Mammary epithelial cell (primary cell): ENCODE measurements at regions of chr18 and their contacts with region 1.

Region 1: GRCh38 chr18:74476140-74476539 is 19.0 kb upstream of the DIPK1C start:
- DNase-seq: no peak
- H3K4me3 ChIP-seq: no peak overlapping the region
- H3K27ac ChIP-seq: no peak overlapping the region
- H3K4me1 ChIP-seq: no peaks in the 10 kb centered on the region
- H3K27me3 ChIP-seq: no peaks in the 10 kb centered on the region
- CTCF ChIP-seq: peak; percentile 30 to 44

Region 2: GRCh38 chr18:74428891-74429510 is 47.1 kb before region 1 on chr18:
- CTCF ChIA-PET with region 1: no interaction called
- dilution Hi-C with region 1: loop called (anchors 5 kb)
- in situ Hi-C with region 1: no loop called
- intact Hi-C with region 1: no loop called
- DNase-seq: no peak
- H3K4me3 ChIP-seq: no peak overlapping the region
- H3K27ac ChIP-seq: no peak overlapping the region
- H3K4me1 ChIP-seq: no peaks in the 10 kb centered on the region
- H3K27me3 ChIP-seq: no peaks in the 10 kb centered on the region
- CTCF ChIP-seq: no peak

Region 3: DNA sequence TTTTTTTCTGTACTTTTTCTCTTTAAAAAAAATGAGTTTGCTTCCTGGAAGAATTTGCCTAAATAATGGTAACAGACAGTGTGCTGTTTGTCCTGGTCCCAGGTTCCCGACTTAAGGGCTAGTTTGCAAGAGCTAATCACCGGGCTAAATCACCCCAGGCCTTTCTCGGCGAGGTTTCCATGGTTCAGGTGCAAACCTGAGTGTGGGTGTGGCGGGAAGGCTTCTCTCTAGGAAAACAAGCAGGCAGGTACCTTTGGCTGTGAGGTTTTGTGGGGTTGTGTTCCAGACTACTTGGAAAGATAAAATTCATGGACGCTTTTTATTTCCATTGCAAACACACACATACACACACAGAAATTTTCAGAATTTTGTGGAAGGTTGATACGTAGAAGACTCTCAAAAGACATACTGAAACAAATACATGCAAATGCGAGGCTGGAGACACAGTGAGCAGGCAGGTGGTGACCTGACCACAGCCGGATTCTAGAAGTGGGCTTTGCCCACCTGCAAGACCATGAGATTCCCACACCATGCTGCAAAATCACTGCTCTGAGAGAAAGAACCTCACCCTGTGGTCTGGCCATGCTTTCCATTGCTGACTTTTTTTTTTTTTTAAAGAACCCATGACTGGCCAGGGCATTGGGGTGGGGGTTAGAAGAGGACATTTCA is 59.0 kb after region 1 on chr18:
- CTCF ChIA-PET with region 1: no interaction called
- dilution Hi-C with region 1: loop called (anchors 5 kb)
- in situ Hi-C with region 1: no loop called
- intact Hi-C with region 1: no loop called
- DNase-seq: no peak
- H3K4me3 ChIP-seq: no peak overlapping the region
- H3K27ac ChIP-seq: no peak overlapping the region
- H3K4me1 ChIP-seq: no peaks in the 10 kb centered on the region
- H3K27me3 ChIP-seq: no peaks in the 10 kb centered on the region
- CTCF ChIP-seq: no peak

Region 4: DNA sequence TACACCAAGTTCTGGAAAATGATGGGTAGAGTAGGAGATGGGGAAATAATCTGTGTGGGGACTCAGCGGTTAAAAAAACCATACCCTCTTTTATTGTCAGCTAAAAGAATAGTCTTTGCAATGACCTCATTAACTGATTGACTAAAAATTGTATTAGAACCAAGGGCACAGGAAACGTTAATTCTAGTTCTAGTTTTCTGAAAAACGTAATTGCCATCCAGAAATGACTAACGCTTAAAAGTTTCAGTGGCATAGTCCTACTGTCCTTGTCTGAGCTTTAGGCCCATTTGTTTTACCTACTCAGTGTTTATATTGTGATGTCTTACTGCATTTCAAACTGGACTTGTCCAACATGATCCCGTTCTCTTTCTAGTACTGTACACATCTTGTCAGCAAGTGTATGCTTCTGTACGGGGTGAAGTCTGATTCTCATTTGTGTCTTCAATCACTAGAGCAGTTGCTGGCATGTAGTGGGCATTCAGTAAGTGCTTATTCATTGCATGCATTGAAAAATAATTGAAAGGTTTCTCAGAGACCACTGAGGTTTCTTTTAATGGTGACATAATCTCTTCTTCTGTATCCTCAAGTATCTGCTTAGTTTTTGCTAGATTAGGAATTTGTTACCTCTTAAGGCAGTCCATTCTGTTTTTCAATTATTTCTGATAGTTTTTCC is 203.0 kb after region 1 on chr18:
- CTCF ChIA-PET with region 1: no interaction called
- dilution Hi-C with region 1: no loop called
- in situ Hi-C with region 1: no loop called
- intact Hi-C with region 1: no loop called
- DNase-seq: no peak
- H3K4me3 ChIP-seq: no peak overlapping the region
- H3K27ac ChIP-seq: no peak overlapping the region
- H3K4me1 ChIP-seq: peaks cover 22% of the 10 kb centered on the region
- H3K27me3 ChIP-seq: no peaks in the 10 kb centered on the region
- CTCF ChIP-seq: no peak